Endothelial cell of umbilical vein (primary cell): ENCODE measurements at regions of chr17 and their contacts with region 1.

Region 1: GRCh38 chr17:28552246-28552999 is at the start of gene UNC119:
- DNase-seq: peak; percentile 60
- H3K4me3 ChIP-seq: peak within 1 kb of the TSS; percentile 59 to 77 (median 64)
- H3K27ac ChIP-seq: no peak within 1 kb of the TSS
- H3K4me1 ChIP-seq: peaks cover 6% of the 10 kb centered on the region
- H3K27me3 ChIP-seq: no peaks in the 10 kb centered on the region
- CTCF ChIP-seq: no peak
- POLR2A ChIP-seq: peak; percentile 73
- total RNA-seq, gene UNC119: 26.3 and 28.1 TPM in 2 replicates

Region 2: GRCh38 chr17:28370038-28370743 is 182.2 kb before region 1 on chr17 and contains the start of gene VTN:
- CTCF ChIA-PET with region 1: no interaction called
- POLR2A ChIA-PET with region 1: no interaction called
- dilution Hi-C with region 1: no loop called
- intact Hi-C with region 1: no loop called
- DNase-seq: peak; percentile 16
- H3K4me3 ChIP-seq: no peak within 1 kb of the TSS
- H3K27ac ChIP-seq: no peak within 1 kb of the TSS
- H3K4me1 ChIP-seq: peaks cover 13% of the 10 kb centered on the region
- H3K27me3 ChIP-seq: no peaks in the 10 kb centered on the region
- CTCF ChIP-seq: no peak
- POLR2A ChIP-seq: no peak
- total RNA-seq, gene VTN: not detected in 2 replicates

Region 3: DNA sequence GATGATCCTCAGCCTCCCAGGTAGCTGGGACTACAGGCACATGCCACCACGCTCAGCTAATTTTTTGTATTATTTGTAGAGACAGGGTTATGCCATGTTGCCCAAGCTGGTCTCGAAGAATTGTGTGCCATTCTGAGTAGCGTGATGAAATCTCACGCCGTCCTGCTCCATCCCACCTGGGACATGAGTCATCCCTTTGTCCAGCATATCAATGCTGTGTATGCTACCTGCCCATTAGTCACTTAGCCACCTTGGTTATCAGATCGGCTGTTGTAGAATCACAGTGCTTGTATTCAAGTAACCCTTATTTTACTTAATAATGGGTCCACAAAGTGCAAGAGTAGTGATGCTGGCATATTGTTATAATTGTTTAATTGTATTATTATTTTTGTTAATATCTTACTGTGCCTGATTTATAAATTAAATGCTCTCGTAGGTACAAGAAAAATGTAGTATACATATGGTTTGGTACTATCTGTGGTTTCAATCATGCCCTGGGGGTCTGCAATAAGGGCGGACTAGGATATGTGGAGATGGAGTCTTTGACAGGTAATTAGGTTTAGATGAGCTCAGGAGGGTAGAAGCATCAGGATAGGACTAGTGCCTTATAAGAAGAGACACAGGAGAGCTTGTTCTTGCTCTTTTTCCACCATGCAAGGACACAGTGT is 105.6 kb before region 1 on chr17:
- CTCF ChIA-PET with region 1: no interaction called
- POLR2A ChIA-PET with region 1: no interaction called
- dilution Hi-C with region 1: no loop called
- intact Hi-C with region 1: no loop called
- DNase-seq: no peak
- H3K4me3 ChIP-seq: no peak overlapping the region
- H3K27ac ChIP-seq: no peak overlapping the region
- H3K4me1 ChIP-seq: no peaks in the 10 kb centered on the region
- H3K27me3 ChIP-seq: peaks cover 6 to 8% of the 10 kb centered on the region in 2 experiments
- CTCF ChIP-seq: no peak
- POLR2A ChIP-seq: no peak

Region 4: GRCh38 chr17:28494445-28495188 is 57.8 kb before region 1 on chr17:
- CTCF ChIA-PET with region 1: interaction called, 16 read pairs
- POLR2A ChIA-PET with region 1: no interaction called
- dilution Hi-C with region 1: no loop called
- intact Hi-C with region 1: no loop called
- DNase-seq: peak; percentile 44
- H3K4me3 ChIP-seq: no peak overlapping the region
- H3K27ac ChIP-seq: no peak overlapping the region
- H3K4me1 ChIP-seq: no peaks in the 10 kb centered on the region
- H3K27me3 ChIP-seq: no peaks in the 10 kb centered on the region
- CTCF ChIP-seq: peak; percentile 84 to 95
- POLR2A ChIP-seq: no peak

Region 5: DNA sequence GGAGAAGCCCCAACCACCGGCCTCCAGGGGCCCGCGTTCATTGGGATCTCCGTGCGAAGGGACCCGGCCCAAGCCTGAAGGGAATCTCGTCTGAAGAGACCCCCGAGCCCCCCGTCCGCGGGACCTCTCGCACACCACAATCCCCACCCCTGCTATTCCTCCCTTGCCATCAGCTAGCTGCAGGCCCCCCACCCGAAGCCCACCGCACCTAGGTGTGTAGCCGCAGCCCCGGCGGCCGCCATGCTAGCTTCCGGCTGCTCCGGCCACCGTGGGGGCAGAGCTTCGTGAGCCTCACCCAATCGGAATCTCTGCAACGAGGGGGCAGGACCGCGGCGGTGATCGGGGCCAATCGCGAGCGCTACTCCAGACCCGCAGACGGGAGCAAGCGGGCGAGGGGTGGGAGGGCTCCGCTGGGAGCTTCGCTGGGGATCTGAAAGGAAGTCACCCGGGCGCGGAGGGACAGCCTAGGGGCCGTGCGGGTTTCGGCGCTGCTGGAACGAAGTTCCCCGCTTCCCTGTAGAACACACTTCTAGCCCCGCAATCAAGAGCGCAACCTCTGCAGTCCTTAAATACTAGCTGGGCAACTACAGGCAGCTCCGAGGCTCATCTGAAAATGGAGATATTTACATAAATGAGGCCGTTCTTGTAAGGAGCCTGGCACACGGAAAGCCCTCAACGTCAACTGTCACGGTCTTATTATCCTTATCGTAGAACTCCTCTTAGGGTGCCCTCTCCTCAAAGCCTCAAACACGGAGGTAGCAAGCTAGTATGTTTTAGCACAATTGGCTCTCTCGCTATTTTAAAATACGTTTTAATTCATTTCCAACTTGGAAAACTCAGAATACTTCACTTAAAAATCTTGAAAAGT is 19.1 kb after region 1 on chr17 and contains the start of gene PIGS:
- CTCF ChIA-PET with region 1: interaction called, 9 read pairs
- POLR2A ChIA-PET with region 1: no interaction called
- dilution Hi-C with region 1: no loop called
- intact Hi-C with region 1: loop called (anchors 2 kb)
- DNase-seq: peak; percentile 94
- H3K4me3 ChIP-seq: peak within 1 kb of the TSS; percentile 52 to 73 (median 64)
- H3K27ac ChIP-seq: peak within 1 kb of the TSS; percentile 15
- H3K4me1 ChIP-seq: peaks cover 10% of the 10 kb centered on the region
- H3K27me3 ChIP-seq: no peaks in the 10 kb centered on the region
- CTCF ChIP-seq: no peak
- POLR2A ChIP-seq: peak; percentile 81
- total RNA-seq, gene PIGS: 68.6 and 71.3 TPM in 2 replicates

Region 6: DNA sequence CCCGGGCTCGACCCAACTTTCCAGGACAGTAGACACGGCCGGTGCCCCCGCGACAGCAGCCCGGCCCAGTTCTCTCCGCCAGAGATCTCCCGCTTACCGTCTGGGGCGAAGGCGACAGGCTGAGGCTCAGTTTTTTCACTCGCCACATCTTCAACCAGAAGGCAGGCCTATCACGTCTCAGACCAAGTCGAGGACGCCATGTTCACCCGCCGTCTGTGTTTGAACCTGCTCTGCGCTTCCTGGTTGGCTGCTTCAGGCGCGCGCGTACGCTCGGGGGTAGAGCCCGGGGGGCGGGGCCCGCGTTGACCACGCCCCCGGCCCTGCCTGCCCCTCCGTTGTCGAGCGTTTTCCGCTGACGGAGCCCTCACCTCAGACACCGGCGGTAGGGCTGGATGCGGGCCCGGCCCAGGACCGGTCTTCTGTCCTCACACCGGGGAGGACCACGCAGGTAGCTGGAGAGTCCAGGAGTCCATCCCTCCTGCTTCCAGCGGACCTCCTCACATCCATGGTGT is 46.4 kb after region 1 on chr17 and contains the start of gene SPAG5:
- CTCF ChIA-PET with region 1: interaction called, 6 read pairs
- POLR2A ChIA-PET with region 1: no interaction called
- dilution Hi-C with region 1: no loop called
- intact Hi-C with region 1: loop called (anchors 1 kb)
- DNase-seq: peak; percentile 97
- H3K4me3 ChIP-seq: peak within 1 kb of the TSS; percentile 61 to 90 (median 68)
- H3K27ac ChIP-seq: peak within 1 kb of the TSS; percentile 95
- H3K4me1 ChIP-seq: peaks cover 18% of the 10 kb centered on the region
- H3K27me3 ChIP-seq: no peaks in the 10 kb centered on the region
- CTCF ChIP-seq: no peak
- POLR2A ChIP-seq: peak; percentile 77
- total RNA-seq, gene SPAG5: 85.4 and 90.6 TPM in 2 replicates